Astrocyte of the cerebellum (primary cell): ENCODE measurements at regions of chr7 and their contacts with region 1.

Region 1: GRCh38 chr7:22854158-22855048 is 31.8 kb upstream of the TOMM7 start:
- DNase-seq: peak; percentile 63
- H3K4me3 ChIP-seq: peak overlapping the region; percentile 67
- CTCF ChIP-seq: no peak

Region 2: GRCh38 chr7:22582860-22583640 is 271.4 kb before region 1 on chr7:
- in situ Hi-C with region 1: loop called (anchors 5 kb)
- DNase-seq: peak; percentile 90
- H3K4me3 ChIP-seq: no peak overlapping the region
- CTCF ChIP-seq: no peak

Region 3: GRCh38 chr7:22732556-22733126 is 121.8 kb before region 1 on chr7:
- in situ Hi-C with region 1: no loop called
- DNase-seq: no peak
- H3K4me3 ChIP-seq: no peak overlapping the region
- CTCF ChIP-seq: peak; percentile 56

Region 4: DNA sequence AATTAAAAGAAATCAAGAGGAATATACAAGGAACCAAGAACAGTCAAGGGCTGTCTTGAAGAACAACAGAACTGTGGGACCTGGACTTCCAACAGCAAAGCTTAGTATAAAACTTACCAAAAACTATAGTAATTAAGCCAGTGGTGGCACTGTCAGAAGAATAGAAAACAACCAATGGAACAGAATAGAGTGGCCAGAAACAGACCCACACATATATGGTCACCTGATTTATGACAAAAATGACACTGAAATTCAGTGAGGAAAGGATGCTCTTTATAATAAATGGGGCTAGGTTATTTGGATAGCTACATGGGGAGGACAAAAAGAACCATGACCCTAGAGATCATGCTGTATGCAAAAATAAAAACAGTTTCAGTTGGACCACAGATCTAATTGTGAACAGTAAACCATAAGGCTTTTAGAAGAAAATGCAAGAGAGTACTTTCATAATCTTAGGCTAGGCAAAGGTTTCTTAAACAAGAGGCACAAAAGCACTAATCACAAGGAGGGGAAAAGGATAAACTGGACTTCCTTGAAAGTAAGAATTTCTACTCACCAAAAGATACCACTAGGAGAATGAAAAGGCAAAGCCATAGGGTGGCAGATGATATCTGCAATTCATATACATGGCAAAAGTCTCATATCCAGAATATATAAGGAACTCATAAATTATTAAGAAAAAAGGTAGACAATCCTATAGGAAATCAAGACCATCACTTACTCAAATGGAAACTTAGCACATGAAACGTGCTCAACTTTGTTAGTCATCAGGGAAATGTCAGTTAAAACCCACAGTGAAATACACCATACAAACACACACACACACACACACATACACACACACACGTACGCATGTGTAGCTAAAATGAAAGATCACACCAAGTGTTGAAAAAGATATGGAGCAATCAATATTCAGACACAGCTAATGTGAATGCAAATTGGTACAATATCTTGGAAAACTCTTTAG is 138.8 kb after region 1 on chr7:
- in situ Hi-C with region 1: loop called (anchors 25 kb)
- DNase-seq: no peak
- H3K4me3 ChIP-seq: no peak overlapping the region
- CTCF ChIP-seq: no peak